AG04450 (cell line): ENCODE measurements at regions of chr17 and their contacts with region 1.

Region 1: DNA sequence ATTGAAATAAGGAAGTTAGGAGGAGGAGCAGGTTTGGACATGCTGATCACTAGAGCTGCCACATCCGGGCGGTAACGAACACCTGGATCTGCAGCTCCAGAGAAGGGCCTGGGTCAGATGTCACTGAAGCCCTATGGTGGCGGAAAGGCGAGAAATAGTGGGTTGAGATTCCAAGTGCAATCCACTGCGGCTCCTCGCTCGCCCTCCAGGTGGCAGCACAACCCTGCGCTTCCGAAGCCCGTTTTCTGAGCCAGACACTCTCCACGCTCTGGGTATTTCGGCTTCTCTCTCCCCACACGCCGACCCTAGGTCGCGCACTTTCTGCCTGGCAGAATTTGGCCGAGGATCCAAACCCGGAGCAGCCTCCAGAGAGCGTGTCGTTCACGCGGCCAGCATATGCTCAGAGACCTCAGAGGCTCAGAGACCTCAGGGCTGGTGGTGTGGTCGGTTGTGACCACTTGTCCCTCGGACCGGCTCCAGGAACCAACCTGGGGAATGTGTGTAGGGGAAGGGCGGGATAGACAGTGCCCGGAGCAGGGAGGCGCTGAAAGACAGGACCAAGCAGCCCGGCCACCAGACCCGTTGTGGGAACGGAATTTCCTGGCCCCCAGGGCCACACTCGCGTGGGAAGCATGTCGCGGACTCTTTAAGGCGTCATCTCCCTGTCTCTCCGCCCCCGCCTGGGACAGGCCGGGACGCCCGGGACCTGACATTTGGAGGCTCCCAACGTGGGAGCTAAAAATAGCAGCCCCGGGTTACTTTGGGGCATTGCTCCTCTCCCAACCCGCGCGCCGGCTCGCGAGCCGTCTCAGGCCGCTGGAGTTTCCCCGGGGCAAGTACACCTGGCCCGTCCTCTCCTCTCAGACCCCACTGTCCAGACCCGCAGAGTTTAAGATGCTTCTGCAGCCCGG is 744 bp upstream of the SLC2A4 start:
- DNase-seq: peak; percentile 51
- H3K4me3 ChIP-seq: peak overlapping the region; percentile 51
- H3K27ac ChIP-seq: no peak overlapping the region
- H3K27me3 ChIP-seq: peaks cover 34% of the 10 kb centered on the region
- CTCF ChIP-seq: peak; percentile 96

Region 2: GRCh38 chr17:7220582-7221277 is 60.0 kb before region 1 on chr17:
- CTCF ChIA-PET with region 1: no interaction called
- POLR2A ChIA-PET with region 1: no interaction called
- DNase-seq: no peak
- H3K4me3 ChIP-seq: peak overlapping the region; percentile 86
- H3K27ac ChIP-seq: peak overlapping the region; percentile 87
- H3K27me3 ChIP-seq: no peaks in the 10 kb centered on the region
- CTCF ChIP-seq: peak; percentile 35

Region 3: DNA sequence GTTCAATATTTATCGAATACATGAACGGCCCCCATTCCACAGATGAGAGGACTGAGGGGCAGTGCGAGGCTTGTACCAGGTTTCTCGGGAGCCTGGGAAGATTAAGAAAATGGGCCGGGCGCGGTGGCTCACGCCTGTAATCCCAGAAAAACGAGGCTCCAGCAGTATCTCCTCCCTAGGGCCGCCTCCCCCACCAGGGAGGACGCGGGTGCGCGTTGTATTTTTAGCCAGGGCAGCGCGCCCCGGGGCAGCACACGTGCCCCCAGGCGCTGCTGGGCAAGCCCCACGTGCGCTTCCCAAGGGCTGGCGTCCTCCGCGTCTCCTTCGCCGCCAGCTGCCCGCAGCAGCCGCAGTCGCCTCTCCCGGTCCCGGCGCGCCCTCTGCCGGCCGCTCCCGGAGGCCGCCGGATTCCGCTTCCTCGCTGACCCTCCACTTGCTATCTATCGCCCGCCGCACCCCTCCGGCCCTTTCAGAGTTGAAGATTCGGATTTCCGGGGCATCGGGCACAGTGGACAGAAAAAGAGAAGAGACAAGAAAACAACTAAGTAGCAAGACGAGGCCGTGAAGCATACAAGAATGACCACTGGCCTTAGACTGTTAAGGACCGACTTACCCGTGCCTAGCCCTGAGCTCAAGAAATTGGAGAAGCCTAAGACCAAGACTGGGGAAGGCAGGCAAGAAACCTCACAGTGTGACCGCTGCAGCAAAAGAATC is 15.6 kb after region 1 on chr17:
- CTCF ChIA-PET with region 1: interaction called, 65 read pairs
- POLR2A ChIA-PET with region 1: no interaction called
- DNase-seq: no peak
- H3K4me3 ChIP-seq: peak overlapping the region; percentile 27; the same call in 1 of the 2 replicates
- H3K27ac ChIP-seq: no peak overlapping the region
- H3K27me3 ChIP-seq: peaks cover 29% of the 10 kb centered on the region
- CTCF ChIP-seq: peak; percentile 85

Region 4: DNA sequence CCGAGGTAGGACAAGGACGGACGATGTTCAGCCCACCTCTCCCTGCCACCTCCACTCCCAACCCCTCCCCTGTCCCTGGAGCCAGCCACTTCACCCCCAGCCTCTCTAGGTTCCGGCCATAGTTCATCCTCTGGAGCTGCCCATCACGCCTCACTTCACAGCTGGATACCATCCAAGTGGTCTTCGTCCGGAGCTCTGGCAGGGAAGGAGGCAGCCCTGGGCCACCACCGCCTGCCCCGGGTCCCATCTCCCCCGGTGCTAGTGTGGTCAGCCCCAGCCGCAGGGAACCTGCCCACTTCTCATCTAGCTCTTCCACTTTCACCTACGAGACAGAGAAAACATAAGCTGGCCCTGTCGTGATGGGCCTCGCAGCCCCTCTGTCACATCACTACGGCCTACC is 40.7 kb after region 1 on chr17:
- CTCF ChIA-PET with region 1: no interaction called
- POLR2A ChIA-PET with region 1: no interaction called
- DNase-seq: no peak
- H3K4me3 ChIP-seq: no peak overlapping the region
- H3K27ac ChIP-seq: no peak overlapping the region
- H3K27me3 ChIP-seq: no peaks in the 10 kb centered on the region
- CTCF ChIP-seq: no peak

Region 5: GRCh38 chr17:7380321-7380720 is 99.5 kb after region 1 on chr17:
- CTCF ChIA-PET with region 1: no interaction called
- POLR2A ChIA-PET with region 1: no interaction called
- DNase-seq: no peak
- H3K4me3 ChIP-seq: no peak overlapping the region
- H3K27ac ChIP-seq: no peak overlapping the region
- H3K27me3 ChIP-seq: peaks cover 37% of the 10 kb centered on the region
- CTCF ChIP-seq: no peak